GM23248 (cell line): ENCODE measurements at regions of chr1 and their contacts with region 1.

Region 1: DNA sequence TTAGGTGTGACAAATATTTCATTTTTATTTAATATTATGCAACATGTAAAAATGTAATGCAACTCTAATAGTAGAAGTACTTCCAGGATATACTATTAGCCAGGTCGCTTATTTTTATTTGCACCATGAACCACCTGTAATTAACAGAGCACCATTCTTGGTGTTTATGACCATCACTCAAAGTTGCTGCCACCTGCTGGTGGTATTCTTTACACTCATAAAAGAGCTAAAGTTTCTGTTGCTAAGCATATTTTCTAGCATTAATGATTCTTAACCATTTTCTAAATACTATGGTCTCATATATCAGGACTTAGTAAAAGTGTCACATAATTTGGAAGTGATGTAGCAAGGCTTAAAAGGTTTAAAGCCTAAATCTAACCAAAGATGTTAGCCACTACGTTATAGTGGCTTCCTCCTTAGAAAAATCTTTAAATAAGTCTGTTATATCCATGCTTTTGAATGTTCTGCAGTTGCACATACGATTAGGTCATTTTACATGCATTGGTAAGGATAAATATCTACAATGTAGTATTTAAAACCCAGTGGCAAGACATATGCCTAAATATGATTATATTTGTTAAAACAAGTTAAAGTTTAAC is 244.5 kb downstream of the NEGR1 start:
- DNase-seq: peak; percentile 59
- H3K4me3 ChIP-seq: no peak overlapping the region
- H3K27ac ChIP-seq: no peak overlapping the region
- H3K4me1 ChIP-seq: no peaks in the 10 kb centered on the region
- H3K27me3 ChIP-seq: no peaks in the 10 kb centered on the region

Region 2: DNA sequence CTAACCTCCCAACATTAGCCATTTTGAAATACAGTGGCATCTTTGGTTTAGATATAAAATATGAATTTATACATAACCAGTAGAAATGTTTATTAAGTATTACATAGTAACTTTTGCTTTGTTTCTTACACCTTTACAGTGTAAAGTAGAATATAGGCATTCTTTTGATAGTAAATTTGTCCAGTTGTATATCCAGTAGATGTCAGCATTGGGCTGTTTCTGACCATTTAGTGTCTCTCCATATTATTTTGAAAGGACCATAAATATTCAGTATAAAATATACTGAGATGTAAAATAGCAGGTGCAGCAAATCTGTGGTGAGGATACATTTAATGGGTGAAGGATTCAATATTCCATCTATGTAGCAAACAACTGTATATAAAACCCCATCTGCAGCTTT is 841.2 kb before region 1 on chr1:
- in situ Hi-C with region 1: loop called (anchors 5 kb)
- DNase-seq: peak; percentile 55
- H3K4me3 ChIP-seq: no peak overlapping the region
- H3K27ac ChIP-seq: no peak overlapping the region
- H3K4me1 ChIP-seq: no peaks in the 10 kb centered on the region
- H3K27me3 ChIP-seq: no peaks in the 10 kb centered on the region

Region 3: DNA sequence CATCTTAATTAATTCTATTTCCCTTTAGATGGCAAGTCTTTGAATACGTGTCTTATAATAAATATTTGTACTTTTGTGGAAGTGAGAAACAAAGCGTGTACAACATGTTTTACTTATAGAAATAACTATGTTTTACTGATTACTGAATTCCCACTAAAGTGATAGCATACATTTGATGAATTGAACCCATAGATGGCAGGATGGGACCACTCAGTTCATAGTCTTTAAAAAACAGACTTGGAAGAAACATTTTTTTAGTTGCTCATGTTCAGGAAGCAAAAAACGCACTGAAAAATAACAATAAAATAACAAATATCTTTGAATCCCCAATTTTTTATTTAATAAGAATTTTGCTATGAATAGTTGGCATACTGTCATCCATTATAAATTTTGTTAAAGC is 449.9 kb before region 1 on chr1:
- in situ Hi-C with region 1: loop called (anchors 25 kb)
- DNase-seq: peak; percentile 51
- H3K4me3 ChIP-seq: no peak overlapping the region
- H3K27ac ChIP-seq: no peak overlapping the region
- H3K4me1 ChIP-seq: no peaks in the 10 kb centered on the region
- H3K27me3 ChIP-seq: no peaks in the 10 kb centered on the region

Region 4: GRCh38 chr1:71987181-71987580 is 50.7 kb before region 1 on chr1:
- in situ Hi-C with region 1: no loop called
- DNase-seq: no peak
- H3K4me3 ChIP-seq: no peak overlapping the region
- H3K27ac ChIP-seq: no peak overlapping the region
- H3K4me1 ChIP-seq: no peaks in the 10 kb centered on the region
- H3K27me3 ChIP-seq: no peaks in the 10 kb centered on the region